ENCODE measurements at regions of chr1 and their contacts with region 1.

Region 1: DNA sequence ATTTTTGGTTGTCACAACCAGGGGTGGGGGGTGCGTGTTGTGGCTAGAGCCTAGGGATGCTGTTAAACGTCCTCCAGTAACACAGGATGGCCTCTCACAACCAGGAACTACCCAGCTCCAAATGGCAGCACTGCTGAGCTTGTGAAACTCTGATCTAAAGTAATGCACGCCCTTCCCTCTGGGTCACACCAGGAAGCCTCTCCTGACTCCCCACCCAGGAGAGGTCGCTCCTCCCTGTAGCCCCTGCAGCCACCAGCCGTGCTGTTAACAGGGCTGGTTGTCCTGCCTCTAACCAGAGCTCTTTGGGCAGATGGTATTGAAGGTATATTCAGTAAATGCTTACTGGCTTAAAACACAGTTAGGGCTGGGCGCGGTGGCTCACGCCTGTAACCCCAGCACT is 73.2 kb downstream of the NKAIN1 start:
- DNase-seq: no peak
- ATAC-seq: no peak
- H3K4me3 ChIP-seq: no peak overlapping the region
- H3K4me3 Mint-ChIP-seq: no peak overlapping the region
- H3K27ac ChIP-seq: no peak overlapping the region
- H3K27ac Mint-ChIP-seq: no peak overlapping the region
- H3K4me1 ChIP-seq: no peaks in the 10 kb centered on the region
- H3K4me1 Mint-ChIP-seq: peaks cover 3% of the 10 kb centered on the region
- H3K27me3 ChIP-seq: no peaks in the 10 kb centered on the region
- H3K27me3 Mint-ChIP-seq: peaks cover 10% of the 10 kb centered on the region
- CTCF ChIP-seq: no peak

Region 2: DNA sequence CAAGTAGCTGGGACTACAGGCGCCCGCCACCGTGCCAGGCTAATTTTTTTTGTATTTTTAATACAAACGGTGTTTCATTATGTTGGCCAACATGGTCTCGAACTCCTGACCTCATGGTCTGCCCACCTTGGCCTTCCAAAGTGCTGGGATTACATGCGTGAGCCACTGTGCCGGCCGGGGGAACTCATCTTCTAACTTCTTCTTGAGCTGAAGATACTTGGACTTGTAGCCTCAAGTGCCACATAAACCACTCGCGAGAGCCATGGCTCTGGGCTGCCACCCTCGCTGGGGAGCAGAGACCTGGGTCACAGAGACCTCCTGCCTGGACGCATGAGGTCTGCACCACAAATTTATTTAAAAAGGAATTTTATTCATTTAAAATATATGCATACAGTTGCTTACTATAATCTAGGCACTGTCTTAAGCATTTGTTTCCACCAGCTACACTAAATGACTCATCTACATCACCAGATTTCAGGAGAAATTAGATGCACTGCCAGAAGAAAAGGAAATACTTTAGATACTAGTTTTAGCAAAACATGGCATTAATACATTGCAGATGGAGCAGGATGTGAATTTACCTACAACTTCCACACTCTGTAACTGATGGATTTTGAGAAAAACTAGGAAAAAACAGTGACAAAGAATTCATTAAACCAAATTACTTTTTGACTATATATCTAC is 71.0 kb before region 1 on chr1:
- CTCF ChIA-PET with region 1: no interaction called
- POLR2A ChIA-PET with region 1: no interaction called
- intact Hi-C with region 1: no loop called
- DNase-seq: no peak
- ATAC-seq: no peak
- H3K4me3 ChIP-seq: no peak overlapping the region
- H3K4me3 Mint-ChIP-seq: no peak overlapping the region
- H3K27ac ChIP-seq: no peak overlapping the region
- H3K27ac Mint-ChIP-seq: no peak overlapping the region
- H3K4me1 ChIP-seq: no peaks in the 10 kb centered on the region
- H3K4me1 Mint-ChIP-seq: no peaks in the 10 kb centered on the region
- H3K27me3 ChIP-seq: no peaks in the 10 kb centered on the region
- H3K27me3 Mint-ChIP-seq: no peaks in the 10 kb centered on the region
- CTCF ChIP-seq: no peak

Region 3: DNA sequence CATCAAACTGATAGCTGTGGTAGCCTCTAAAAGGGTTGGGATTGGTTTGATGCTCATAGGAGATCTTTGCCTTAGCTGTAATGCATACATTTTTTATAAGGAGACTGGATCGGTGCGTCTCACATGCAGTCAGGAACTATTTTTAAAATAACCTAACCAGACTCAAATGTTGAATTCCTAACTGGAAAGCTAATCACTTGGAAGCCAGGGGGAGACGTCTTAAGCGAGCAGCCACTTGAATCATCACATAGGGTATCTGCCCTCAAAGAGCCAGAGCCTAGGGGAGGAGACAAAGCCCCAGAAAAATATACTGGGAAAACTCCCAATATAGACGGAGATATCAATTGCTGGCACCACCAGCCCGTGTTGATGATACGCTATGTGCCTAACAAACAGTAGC is 39.2 kb before region 1 on chr1:
- CTCF ChIA-PET with region 1: no interaction called
- POLR2A ChIA-PET with region 1: no interaction called
- intact Hi-C with region 1: no loop called
- DNase-seq: no peak
- ATAC-seq: no peak
- H3K4me3 ChIP-seq: no peak overlapping the region
- H3K4me3 Mint-ChIP-seq: no peak overlapping the region
- H3K27ac ChIP-seq: no peak overlapping the region
- H3K27ac Mint-ChIP-seq: no peak overlapping the region
- H3K4me1 ChIP-seq: no peaks in the 10 kb centered on the region
- H3K4me1 Mint-ChIP-seq: no peaks in the 10 kb centered on the region
- H3K27me3 ChIP-seq: no peaks in the 10 kb centered on the region
- H3K27me3 Mint-ChIP-seq: peaks cover 5% of the 10 kb centered on the region
- CTCF ChIP-seq: no peak

Region 4: GRCh38 chr1:31155216-31155841 is 11.1 kb before region 1 on chr1:
- CTCF ChIA-PET with region 1: interaction called, 16 read pairs
- POLR2A ChIA-PET with region 1: no interaction called
- intact Hi-C with region 1: no loop called
- DNase-seq: peak; percentile 75
- ATAC-seq: peak; percentile 80
- H3K4me3 ChIP-seq: peak overlapping the region; percentile 53 to 76 (median 67)
- H3K4me3 Mint-ChIP-seq: peak overlapping the region; percentile 90
- H3K27ac ChIP-seq: peak overlapping the region in 1 of 2 donors; percentile 39
- H3K27ac Mint-ChIP-seq: peak overlapping the region; percentile 80
- H3K4me1 ChIP-seq: peaks cover 5 to 14% of the 10 kb centered on the region in 2 donors
- H3K4me1 Mint-ChIP-seq: peaks cover 9% of the 10 kb centered on the region
- H3K27me3 ChIP-seq: no peaks in the 10 kb centered on the region
- H3K27me3 Mint-ChIP-seq: no peaks in the 10 kb centered on the region
- CTCF ChIP-seq: peak; percentile 55

Region 5: GRCh38 chr1:32394141-32394889 is 1227.9 kb after region 1 on chr1 and contains the start of gene BSDC1:
- CTCF ChIA-PET with region 1: no interaction called
- POLR2A ChIA-PET with region 1: no interaction called
- intact Hi-C with region 1: no loop called
- DNase-seq: peak; percentile 99
- ATAC-seq: peak; percentile 99
- H3K4me3 ChIP-seq: peak within 1 kb of the TSS; percentile 66 to 94 (median 84)
- H3K4me3 Mint-ChIP-seq: peak within 1 kb of the TSS; percentile 99
- H3K27ac ChIP-seq: peak within 1 kb of the TSS; percentile 91
- H3K27ac Mint-ChIP-seq: peak within 1 kb of the TSS; percentile 99
- H3K4me1 ChIP-seq: peaks cover 14 to 27% of the 10 kb centered on the region in 2 donors
- H3K4me1 Mint-ChIP-seq: peaks cover 31% of the 10 kb centered on the region
- H3K27me3 ChIP-seq: no peaks in the 10 kb centered on the region
- H3K27me3 Mint-ChIP-seq: peaks cover 3% of the 10 kb centered on the region
- CTCF ChIP-seq: no peak
- total RNA-seq, gene BSDC1: 117 and 124 TPM in 2 replicates